ENCODE measurements at regions of chr16 and their contacts with region 1.

Region 1: GRCh38 chr16:29729116-29729521 is 16.7 kb downstream of the C16orf54 start:
- DNase-seq: no peak
- H3K4me3 ChIP-seq: no peak overlapping the region
- H3K27ac ChIP-seq: no peak overlapping the region
- H3K4me1 ChIP-seq: no peaks in the 10 kb centered on the region
- H3K27me3 ChIP-seq: no peaks in the 10 kb centered on the region
- CTCF ChIP-seq: peak in 2 of 3 experiments; percentile 68 to 90; a peak in 3 of 4 replicates
- EP300 ChIP-seq: no peak
- POLR2A ChIP-seq: no peak
- RAD21 ChIP-seq: peak; percentile 54 to 63

Region 2: GRCh38 chr16:29694384-29695195 is 34.5 kb before region 1 on chr16:
- CTCF ChIA-PET with region 1: interaction called, 138 read pairs
- POLR2A ChIA-PET with region 1: interaction called, 490 read pairs
- DNase-seq: no peak
- H3K4me3 ChIP-seq: no peak overlapping the region
- H3K27ac ChIP-seq: no peak overlapping the region
- H3K4me1 ChIP-seq: peaks cover 0 to 11% (median 5%) of the 10 kb centered on the region in 4 experiments; a peak in 5 of 7 replicates
- H3K27me3 ChIP-seq: no peaks in the 10 kb centered on the region
- CTCF ChIP-seq: no peak
- EP300 ChIP-seq: no peak
- POLR2A ChIP-seq: no peak
- RAD21 ChIP-seq: no peak

Region 3: DNA sequence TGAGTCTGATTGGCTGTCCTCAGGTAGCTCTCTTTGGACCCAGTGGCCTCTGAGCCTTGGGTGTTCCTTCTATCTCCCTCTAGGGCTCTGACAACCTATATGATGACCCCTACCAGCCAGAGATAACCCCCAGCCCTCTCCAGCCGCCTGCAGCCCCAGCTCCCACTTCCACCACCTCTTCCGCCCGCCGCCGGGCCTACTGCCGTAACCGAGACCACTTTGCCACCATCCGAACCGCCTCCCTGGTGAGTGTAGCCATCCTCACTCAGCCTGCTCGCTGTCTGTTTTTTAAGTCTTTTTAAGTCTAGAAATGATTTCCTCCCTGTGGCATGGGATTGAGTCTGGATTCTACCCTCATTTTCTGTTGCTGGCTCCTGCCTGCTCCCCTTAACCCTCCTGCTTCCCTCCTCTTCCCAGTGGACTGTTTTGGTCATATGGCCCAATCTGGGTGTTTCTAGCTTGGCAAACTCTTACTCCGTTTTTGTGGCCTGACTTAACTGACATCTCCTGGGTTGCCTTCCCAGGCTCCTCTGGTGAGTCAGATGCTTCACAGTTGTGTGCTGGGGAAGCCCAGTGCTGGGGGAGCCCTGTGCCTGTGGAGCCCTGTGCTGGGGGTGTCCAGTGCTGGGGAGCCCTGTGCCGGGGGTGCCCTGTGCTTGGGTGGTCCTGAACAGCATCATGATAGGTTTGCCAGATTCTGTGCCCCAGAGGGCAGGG is 254.5 kb after region 1 on chr16:
- CTCF ChIA-PET with region 1: no interaction called
- POLR2A ChIA-PET with region 1: no interaction called
- DNase-seq: no peak
- H3K4me3 ChIP-seq: no peak overlapping the region
- H3K27ac ChIP-seq: no peak overlapping the region
- H3K4me1 ChIP-seq: no peaks in the 10 kb centered on the region
- H3K27me3 ChIP-seq: no peaks in the 10 kb centered on the region
- CTCF ChIP-seq: no peak
- EP300 ChIP-seq: no peak
- POLR2A ChIP-seq: no peak
- RAD21 ChIP-seq: no peak

Region 4: GRCh38 chr16:30149250-30149930 is 420.3 kb after region 1 on chr16:
- CTCF ChIA-PET with region 1: no interaction called
- POLR2A ChIA-PET with region 1: no interaction called
- DNase-seq: no peak
- H3K4me3 ChIP-seq: no peak overlapping the region
- H3K27ac ChIP-seq: no peak overlapping the region
- H3K4me1 ChIP-seq: no peaks in the 10 kb centered on the region
- H3K27me3 ChIP-seq: no peaks in the 10 kb centered on the region
- CTCF ChIP-seq: no peak
- EP300 ChIP-seq: no peak
- POLR2A ChIP-seq: no peak
- RAD21 ChIP-seq: no peak

Measured in H1 (cell line).